ENCODE measurements at regions of chr22 and their contacts with region 1.

Region 1: DNA sequence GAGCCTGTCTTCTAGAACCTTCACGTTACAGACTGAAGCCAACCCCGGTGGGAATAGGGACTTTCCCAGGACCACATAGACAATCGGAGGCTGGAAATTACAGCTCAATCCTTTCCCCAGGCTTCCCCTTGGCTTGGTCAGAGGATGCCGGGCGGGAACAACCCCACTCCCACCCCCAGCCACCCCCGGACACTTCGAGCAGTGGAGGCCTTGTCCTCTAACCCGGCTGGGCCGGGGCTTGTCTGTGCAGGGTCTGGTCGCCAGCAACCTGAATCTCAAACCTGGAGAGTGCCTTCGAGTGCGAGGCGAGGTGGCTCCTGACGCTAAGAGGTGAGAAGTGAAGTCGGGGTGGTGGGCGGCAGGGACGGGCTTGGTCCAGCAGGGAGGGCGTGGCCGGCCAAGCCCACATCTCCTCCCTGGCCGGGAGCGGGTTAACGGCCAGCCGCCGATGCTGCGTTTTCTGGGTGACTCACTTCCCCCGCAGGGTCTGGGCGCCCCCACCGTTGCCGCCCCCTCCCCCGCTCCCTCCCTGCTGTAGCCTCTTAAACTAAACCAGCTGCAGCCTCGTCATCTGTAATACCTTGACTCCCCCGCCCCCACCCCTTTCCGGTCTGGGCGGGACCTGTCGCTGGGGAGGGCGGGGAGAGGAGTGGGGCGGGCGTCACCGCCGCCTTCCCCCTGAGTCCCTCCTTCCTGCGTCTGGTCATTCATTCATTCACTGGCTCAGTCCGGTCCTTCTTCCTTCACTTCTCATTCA is 1.5 kb downstream of the LGALS1 start:
- DNase-seq: peak; percentile 96
- H3K4me3 ChIP-seq: peak overlapping the region; percentile 48 to 67 (median 59)
- H3K27ac ChIP-seq: peak overlapping the region; percentile 92 to 99 (median 95)
- H3K4me1 ChIP-seq: peaks cover 0 to 73% (median 63%) of the 10 kb centered on the region in 4 donors
- H3K27me3 ChIP-seq: no peaks in the 10 kb centered on the region
- CTCF ChIP-seq: no peak
- EP300 ChIP-seq: peak in 2 of 4 donors; percentile 24 to 49
- POLR2A ChIP-seq: peak; percentile 19 to 37

Region 2: GRCh38 chr22:37643225-37643847 is 33.6 kb before region 1 on chr22:
- intact Hi-C with region 1: loop called (anchors 1 kb)
- DNase-seq: peak; percentile 92
- H3K4me3 ChIP-seq: no peak overlapping the region
- H3K27ac ChIP-seq: no peak overlapping the region
- H3K4me1 ChIP-seq: peaks cover 0 to 24% (median 21%) of the 10 kb centered on the region in 4 donors
- H3K27me3 ChIP-seq: peaks cover 0 to 7% (median 6%) of the 10 kb centered on the region in 3 donors
- CTCF ChIP-seq: peak; percentile 79 to 94 (median 91)
- EP300 ChIP-seq: no peak
- POLR2A ChIP-seq: no peak

Region 3: DNA sequence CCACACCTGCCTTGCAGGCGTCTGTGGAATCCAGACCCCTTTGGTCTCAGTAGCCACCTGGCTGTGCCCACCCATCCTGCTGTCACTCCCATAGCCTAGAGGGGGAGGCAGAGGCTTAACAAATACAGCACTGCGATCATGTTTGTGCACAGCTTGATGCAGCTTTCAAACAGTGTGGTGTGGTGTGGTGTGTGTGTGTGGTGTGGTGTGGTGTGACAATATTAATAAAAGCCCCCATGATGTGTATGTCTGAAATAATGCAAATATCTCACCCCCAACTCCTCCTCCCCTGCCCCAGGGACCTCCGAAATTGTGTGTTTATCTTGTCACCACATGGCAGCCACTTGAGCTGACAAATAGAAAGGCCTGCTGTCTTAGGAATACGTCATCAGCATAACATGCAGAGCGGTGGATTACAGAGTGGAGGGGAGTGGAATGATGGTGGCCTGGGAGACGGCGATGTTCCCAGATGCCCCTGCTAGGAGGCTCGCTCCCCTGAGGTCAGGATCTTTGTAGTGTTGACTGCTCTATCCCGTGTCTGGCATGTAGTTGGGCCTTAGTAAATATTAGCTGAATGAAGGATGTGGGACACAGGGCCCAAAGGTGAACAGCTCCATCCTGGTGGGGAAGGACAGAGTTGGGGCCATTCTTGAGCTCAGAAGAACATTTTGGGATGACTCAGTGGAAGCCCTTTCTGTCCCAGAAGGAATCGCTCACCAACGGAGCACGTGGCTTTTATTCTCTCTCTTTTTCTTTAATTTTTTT is 15.6 kb before region 1 on chr22:
- intact Hi-C with region 1: loop called (anchors 2 kb)
- DNase-seq: no peak
- H3K4me3 ChIP-seq: no peak overlapping the region
- H3K27ac ChIP-seq: peak overlapping the region; percentile 75 to 95 (median 83)
- H3K4me1 ChIP-seq: peaks cover 0 to 70% (median 64%) of the 10 kb centered on the region in 4 donors
- H3K27me3 ChIP-seq: no peaks in the 10 kb centered on the region
- CTCF ChIP-seq: peak in 3 of 4 experiments; percentile 11 to 54 (median 35)
- EP300 ChIP-seq: no peak
- POLR2A ChIP-seq: no peak

Region 4: DNA sequence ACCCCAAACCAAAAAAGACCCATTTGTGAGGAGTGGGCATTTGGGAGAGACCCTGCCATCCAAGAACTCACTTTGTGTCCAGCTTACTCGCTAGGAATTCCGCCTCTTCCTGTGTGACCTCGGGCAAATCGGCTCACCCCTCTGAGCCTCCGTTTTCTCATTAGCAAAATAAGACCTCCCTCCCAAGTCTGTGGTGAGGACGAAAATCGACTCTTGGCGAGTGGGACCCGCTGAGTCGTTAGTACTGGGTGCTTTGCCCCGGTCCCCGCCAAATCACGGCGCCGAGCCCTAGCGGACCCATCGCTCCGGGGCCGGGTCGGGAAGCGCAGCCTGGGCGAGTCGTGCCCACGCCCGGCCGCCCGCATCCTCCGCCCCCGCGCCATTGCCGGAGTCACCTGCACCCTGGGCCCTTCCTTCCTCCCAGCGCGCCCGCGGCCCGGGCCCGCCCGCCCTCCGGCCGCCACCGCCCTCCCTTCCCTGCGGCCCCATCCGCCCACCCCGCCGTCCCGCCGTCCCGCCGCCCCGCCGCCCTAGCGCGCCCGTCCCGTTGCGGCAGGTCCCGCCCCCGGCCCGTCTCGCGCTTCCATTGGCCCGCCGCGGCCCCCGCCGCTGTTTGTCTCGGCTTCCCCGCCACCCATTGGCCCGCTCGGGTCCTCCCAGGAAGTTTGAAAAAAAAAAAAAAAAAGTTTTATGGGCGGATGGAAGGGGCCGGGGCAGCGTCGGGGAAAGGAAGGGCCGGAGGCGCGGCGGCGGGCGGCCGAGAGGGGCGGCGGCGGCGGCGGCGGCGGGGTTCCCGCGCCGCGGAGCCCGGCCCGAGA is 68.8 kb after region 1 on chr22:
- intact Hi-C with region 1: loop called (anchors 2 kb)
- DNase-seq: peak; percentile 96
- H3K4me3 ChIP-seq: peak overlapping the region; percentile 72 to 99 (median 76)
- H3K27ac ChIP-seq: peak overlapping the region; percentile 91 to 98 (median 98)
- H3K4me1 ChIP-seq: peaks cover 0 to 89% (median 84%) of the 10 kb centered on the region in 4 donors
- H3K27me3 ChIP-seq: no peaks in the 10 kb centered on the region
- CTCF ChIP-seq: no peak
- EP300 ChIP-seq: no peak
- POLR2A ChIP-seq: no peak